ENCODE measurements at regions of chr11 and their contacts with region 1.

Region 1: GRCh38 chr11:130213143-130213978 is 53.8 kb downstream of the ST14 start:
- DNase-seq: peak; percentile 34 to 84
- H3K4me3 ChIP-seq: no peak overlapping the region
- H3K4me1 ChIP-seq: no peaks in the 10 kb centered on the region
- H3K27me3 ChIP-seq: no peaks in the 10 kb centered on the region

Region 2: DNA sequence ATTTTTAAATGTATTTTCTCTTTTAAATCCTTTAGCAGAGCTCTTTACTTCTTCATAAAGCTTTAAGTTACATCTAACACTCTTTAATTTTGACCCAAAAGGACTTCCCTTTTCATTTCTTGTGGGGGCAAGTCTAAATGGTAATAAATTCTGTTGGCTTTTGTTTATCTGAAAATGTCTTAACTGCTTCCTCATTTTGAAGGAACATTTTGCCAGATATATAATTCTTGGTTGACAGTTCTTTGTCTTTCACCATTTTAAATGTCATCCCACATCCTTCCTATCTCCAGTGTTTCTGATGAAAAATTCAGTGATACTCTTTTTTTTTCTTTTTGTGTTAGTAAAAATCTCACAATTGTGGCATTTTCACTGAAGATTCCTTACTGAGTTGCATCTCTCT is 146.1 kb after region 1 on chr11:
- in situ Hi-C with region 1: no loop called
- DNase-seq: no peak
- H3K4me3 ChIP-seq: no peak overlapping the region
- H3K4me1 ChIP-seq: no peaks in the 10 kb centered on the region
- H3K27me3 ChIP-seq: no peaks in the 10 kb centered on the region

Region 3: DNA sequence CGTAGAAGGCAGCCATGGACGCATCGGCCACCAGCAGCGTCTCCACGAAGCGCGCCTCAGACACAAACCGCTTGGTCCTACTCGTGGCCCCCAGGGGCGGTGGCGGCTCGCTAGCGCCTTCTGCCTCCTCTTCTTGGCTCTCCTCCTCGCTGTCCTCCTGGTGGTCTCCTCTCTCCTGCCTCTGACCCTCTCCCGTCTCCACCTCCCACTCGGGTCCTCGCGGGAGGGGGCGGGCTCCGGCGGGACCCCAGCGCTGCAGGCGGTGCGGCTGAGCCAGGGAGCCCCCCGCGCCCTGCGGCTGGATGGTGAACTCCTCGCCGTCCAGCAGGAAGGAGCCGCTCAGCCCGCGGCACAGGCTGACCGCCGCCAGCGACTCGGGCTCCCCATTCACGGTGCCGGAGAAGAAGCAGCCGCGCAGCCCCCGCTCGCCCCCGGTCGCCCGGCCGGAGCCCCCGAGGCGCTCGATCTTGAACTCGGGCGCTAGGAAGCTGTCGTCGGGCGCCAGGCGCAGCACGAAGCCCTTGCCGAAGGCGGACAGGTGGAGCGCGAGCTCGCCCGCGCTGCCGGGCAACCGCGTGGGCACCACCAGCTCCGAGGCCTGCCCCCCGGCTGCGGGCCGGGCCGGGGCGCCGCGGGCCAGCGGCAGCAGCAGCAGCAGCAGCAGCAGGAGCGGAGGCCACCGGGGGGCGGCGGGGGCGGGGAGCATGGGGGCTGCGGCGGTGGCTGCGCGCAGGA is 214.4 kb after region 1 on chr11:
- in situ Hi-C with region 1: loop called (anchors 10 kb)
- DNase-seq: peak in 1 of 2 experiments; percentile 17
- H3K4me3 ChIP-seq: peak overlapping the region; percentile 2; the same call in 1 of the 2 replicates
- H3K4me1 ChIP-seq: no peaks in the 10 kb centered on the region
- H3K27me3 ChIP-seq: peaks cover 65% of the 10 kb centered on the region

Region 4: DNA sequence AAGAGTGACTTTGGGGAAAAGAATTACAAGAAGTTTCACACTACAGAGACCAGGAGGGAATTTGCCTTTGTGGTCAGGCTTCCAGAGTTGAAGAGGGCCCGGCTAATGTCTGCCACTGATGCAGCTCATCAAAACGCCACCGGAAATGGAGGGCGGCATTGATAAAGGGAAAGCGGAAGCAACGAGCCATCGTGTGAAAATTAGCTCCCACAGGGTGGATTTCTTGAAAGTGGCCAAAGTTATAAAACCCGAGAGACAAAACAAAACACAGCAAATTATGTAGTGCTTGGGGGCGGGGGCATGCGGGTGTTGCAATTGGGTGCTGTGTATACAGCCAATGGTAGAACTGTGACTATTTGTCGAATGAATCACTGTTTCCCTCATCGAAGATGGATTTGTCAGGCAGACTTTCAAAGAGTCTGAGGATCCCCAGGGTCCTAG is 348.1 kb after region 1 on chr11:
- in situ Hi-C with region 1: no loop called
- DNase-seq: no peak
- H3K4me3 ChIP-seq: no peak overlapping the region
- H3K4me1 ChIP-seq: no peaks in the 10 kb centered on the region
- H3K27me3 ChIP-seq: no peaks in the 10 kb centered on the region

Region 5: GRCh38 chr11:130861902-130862860 is 648.8 kb after region 1 on chr11:
- in situ Hi-C with region 1: loop called (anchors 10 kb)
- DNase-seq: peak; percentile 48 to 93
- H3K4me3 ChIP-seq: no peak overlapping the region
- H3K4me1 ChIP-seq: no peaks in the 10 kb centered on the region
- H3K27me3 ChIP-seq: no peaks in the 10 kb centered on the region

Measured in HAP-1 (cell line).